Activated CD8-positive, alpha-beta memory T cell treated with anti-CD3 and anti-CD28 coated beads, Interleukin-2, amount 10 ng/mL, durations not matched to agents 7 days and 5 days (primary cell): ENCODE measurements at regions of chr11 and their contacts with region 1.

Region 1: DNA sequence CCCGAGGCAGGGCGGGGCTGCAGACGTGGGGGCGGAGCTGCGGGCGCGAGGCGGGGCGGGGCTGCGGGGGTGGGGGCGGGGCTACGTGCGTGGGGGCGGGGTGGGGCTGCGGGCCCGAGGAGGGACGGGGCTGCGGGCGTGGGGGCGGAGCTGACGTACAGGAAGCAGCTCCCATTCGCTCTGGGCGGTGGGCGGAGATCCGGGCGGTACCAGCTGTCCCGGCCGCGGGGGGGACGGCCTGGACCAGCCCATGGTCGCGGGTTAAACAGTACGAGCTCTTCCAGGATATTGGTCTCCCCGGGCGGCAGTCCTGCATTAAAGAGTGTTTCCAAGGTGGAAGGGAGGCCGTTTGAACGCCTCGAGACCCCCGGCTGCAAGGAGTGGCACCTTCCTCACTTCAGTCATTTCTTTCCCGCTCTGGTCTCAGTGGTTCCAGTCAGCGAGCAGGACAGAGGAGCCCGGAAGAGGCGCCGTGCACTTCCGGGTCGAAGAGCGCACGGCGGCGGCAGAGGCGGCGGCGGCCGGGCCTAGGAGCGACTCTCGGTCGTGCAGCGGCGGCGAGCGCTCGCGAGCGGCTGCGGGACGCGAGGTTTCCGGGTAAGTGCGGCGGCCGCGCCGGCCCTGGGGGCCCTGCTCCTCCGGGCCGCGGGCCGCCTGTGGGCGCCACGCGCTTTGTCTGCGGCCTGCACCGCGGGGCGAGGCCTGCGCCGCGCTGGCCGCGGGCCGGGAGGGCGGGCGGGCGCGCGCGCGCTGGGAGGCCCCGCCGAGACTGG is at the start of gene PHRF1:
- DNase-seq: peak; percentile 96
- ATAC-seq: peak; percentile 87
- H3K4me3 Mint-ChIP-seq: peak within 1 kb of the TSS; percentile 85
- H3K27ac Mint-ChIP-seq: peak within 1 kb of the TSS; percentile 98
- H3K4me1 Mint-ChIP-seq: peaks cover 47% of the 10 kb centered on the region
- H3K27me3 Mint-ChIP-seq: peaks cover 21% of the 10 kb centered on the region
- total RNA-seq, gene PHRF1: 60.2 to 62.0 TPM

Region 2: DNA sequence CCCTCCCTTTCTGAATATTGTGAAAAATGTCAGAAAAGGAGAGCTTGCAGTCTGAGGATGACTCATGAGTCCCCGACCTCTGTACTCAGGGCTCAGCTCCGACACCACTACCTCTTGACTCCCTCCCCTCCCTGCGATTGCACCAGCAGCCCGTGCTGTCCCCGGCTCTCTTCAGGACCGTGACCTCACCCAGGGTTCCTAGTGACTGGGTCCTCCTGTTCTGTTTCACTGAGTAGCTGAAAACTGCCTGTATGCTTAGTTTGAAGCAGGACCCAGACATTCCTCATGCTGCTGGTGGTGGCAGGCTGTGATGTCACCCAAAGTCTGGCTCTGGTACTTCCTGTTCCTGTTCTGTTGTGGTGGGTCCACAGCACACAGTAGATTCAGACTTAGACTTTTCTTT is 11.8 kb after region 1 on chr11:
- CTCF ChIA-PET with region 1: interaction called, 12 read pairs
- DNase-seq: peak; percentile 88
- ATAC-seq: peak; percentile 97
- H3K4me3 Mint-ChIP-seq: peak overlapping the region; percentile 72
- H3K27ac Mint-ChIP-seq: peak overlapping the region; percentile 100
- H3K4me1 Mint-ChIP-seq: peaks cover 40% of the 10 kb centered on the region
- H3K27me3 Mint-ChIP-seq: no peaks in the 10 kb centered on the region

Region 3: DNA sequence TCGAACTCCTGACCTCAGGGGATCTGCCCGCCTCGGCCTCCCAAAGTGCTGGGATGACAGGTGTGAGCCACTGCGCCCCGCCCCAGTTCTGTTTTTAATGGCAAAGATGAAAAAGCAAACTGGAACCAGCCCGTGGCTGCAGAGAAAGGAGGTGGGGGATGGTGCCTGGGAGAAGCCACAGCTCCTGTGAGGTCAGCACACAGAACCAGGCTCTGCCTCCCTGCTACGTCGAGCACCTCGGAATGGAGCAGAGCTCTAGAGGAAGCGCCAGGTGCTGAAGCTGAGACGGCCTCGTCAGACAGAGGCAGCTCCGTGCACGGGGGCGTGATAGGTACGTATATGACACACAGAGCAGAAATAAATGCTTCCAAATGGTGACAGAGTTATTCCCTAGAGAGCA is 69.4 kb after region 1 on chr11:
- CTCF ChIA-PET with region 1: no interaction called
- DNase-seq: no peak
- ATAC-seq: no peak
- H3K4me3 Mint-ChIP-seq: no peak overlapping the region
- H3K27ac Mint-ChIP-seq: no peak overlapping the region
- H3K4me1 Mint-ChIP-seq: no peaks in the 10 kb centered on the region
- H3K27me3 Mint-ChIP-seq: peaks cover under 1% of the 10 kb centered on the region

Region 4: DNA sequence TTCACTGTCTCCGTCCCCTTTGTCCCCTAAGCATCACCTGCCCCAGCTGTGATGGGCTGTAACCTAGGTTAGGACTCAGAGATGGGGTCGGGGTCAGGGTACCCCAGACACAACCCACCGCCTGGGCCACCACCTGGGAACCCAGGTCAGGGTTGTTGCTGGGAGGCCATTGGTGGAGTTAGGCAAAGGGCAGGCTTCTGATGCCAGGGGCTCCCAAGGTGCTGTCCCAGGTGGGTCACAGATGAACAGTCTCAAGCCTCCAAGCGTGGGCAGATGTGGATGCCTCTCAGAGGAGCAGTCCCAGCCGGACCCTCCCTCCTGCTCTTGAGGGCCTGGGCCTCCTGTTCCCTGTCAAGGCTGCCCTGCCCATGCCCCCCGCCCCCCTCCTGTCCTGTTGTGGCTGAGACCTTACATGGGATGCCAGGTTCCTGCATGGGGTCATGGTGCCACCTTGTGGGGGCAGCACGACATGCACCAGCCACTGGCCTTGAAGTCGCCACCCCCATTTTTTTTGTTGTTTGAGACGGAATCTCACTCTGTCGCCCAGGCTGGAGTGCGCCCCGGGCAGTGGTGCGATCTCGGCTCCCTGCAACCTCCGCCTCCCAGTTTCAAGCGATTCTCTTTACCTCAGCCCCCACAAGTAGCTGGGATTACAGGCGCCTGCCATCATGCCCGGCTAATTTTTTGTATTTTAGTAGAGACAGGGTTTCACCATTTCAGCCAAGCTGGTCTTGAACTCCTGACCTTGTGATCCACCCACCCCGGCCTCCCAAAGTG is 189.0 kb after region 1 on chr11:
- CTCF ChIA-PET with region 1: no interaction called
- DNase-seq: peak; percentile 78
- ATAC-seq: peak; percentile 78
- H3K4me3 Mint-ChIP-seq: no peak overlapping the region
- H3K27ac Mint-ChIP-seq: no peak overlapping the region
- H3K4me1 Mint-ChIP-seq: peaks cover 2% of the 10 kb centered on the region
- H3K27me3 Mint-ChIP-seq: no peaks in the 10 kb centered on the region